Activated naive CD4-positive, alpha-beta T cell treated with anti-CD3 and anti-CD28 coated beads for 36 hours (primary cell): ENCODE measurements at regions of chr7 and their contacts with region 1.

Region 1: DNA sequence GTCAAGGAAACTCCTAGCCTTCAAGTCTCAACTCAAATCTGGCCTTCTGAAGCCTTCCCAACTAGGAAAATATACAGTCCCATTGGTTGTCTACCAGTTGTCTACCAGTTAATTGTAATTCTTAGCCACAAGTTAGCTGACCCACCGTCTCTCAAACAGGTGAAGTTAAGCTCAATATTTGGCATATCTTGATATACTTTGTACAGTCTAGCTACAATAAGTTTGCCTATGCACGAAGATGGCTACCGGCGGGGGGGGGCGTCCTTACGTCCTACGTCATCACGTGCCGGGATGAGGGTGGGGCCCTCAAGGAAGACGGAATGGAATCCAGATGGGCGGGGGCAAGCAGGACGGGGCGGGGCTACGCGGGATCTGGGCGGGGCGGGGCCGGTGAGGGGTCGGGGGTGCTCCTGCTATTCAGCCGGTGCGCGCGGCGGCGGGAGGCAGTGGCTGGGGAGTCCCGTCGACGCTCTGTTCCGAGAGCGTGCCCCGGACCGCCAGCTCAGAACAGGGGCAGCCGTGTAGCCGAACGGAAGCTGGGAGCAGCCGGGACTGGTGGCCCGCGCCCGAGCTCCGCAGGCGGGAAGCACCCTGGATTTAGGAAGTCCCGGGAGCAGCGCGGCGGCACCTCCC is at the start of gene AHR:
- DNase-seq: peak; percentile 97
- H3K4me3 Mint-ChIP-seq: peak within 1 kb of the TSS; percentile 92
- H3K27ac Mint-ChIP-seq: peak within 1 kb of the TSS; percentile 91
- H3K4me1 Mint-ChIP-seq: peaks cover 25% of the 10 kb centered on the region
- H3K27me3 Mint-ChIP-seq: no peaks in the 10 kb centered on the region
- total RNA-seq, gene AHR: 24.5 to 27.5 TPM

Region 2: GRCh38 chr7:16420649-16421332 is 877.5 kb before region 1 on chr7:
- CTCF ChIA-PET with region 1: no interaction called
- intact Hi-C with region 1: loop called (anchors 5 kb)
- DNase-seq: peak; percentile 90
- H3K4me3 Mint-ChIP-seq: peak overlapping the region; percentile 92
- H3K27ac Mint-ChIP-seq: peak overlapping the region; percentile 89
- H3K4me1 Mint-ChIP-seq: peaks cover 13% of the 10 kb centered on the region
- H3K27me3 Mint-ChIP-seq: no peaks in the 10 kb centered on the region

Region 3: DNA sequence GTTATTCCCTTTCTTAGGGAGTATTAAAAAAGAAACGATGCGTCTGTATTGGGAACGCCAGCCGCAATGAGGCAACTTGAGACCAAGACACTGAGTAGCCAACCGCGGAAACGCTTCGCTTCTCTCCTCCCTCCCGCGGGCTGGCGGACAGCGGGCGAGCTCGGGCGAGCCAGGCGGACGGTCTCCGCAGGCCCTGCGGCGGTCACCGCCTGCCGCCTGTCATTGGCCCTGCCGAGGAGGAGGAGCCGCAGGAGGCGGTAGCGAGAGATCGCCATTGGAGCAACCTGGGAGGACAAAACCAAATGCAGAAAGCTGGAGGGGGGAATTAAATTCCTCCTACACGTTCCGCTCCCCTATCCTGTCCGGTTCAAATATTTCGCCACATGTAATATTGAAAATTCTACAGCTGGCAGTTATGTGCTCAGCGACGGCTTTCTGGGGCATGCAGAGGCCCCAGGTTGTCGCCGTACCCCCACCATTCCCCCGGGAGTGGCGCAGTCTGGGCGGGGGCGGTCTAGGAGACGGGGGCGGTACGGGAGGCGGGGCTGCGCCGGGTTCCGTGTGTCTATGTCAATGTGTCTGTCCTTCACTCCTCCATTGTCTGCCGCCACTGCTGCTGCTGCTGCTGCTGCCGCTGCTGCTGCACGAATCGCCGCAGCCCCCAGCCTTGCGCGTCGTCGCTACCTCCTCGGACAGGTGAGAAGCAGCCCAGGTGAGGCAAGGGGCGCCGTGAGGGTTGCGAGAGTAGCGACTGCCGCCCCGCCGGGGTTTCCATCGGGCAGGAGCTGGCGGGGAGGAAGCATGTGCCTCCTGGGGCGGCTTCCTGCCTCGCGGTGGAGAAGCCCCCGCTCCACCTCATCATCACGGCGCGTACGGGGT is 652.5 kb before region 1 on chr7 and contains the starts of genes ANKMY2 and BZW2:
- CTCF ChIA-PET with region 1: no interaction called
- intact Hi-C with region 1: loop called (anchors 1 kb)
- DNase-seq: peak; percentile 94
- H3K4me3 Mint-ChIP-seq: peak within 1 kb of the TSS; percentile 97
- H3K27ac Mint-ChIP-seq: peak within 1 kb of the TSS; percentile 95
- H3K4me1 Mint-ChIP-seq: peaks cover 53% of the 10 kb centered on the region
- H3K27me3 Mint-ChIP-seq: no peaks in the 10 kb centered on the region
- total RNA-seq, gene ANKMY2: 4.6 to 4.7 TPM
- total RNA-seq, gene BZW2: 118 to 122 TPM

Region 4: GRCh38 chr7:17063045-17063383 is 235.3 kb before region 1 on chr7:
- CTCF ChIA-PET with region 1: interaction called, 15 read pairs
- intact Hi-C with region 1: loop called (anchors 1 kb)
- DNase-seq: no peak
- H3K4me3 Mint-ChIP-seq: no peak overlapping the region
- H3K27ac Mint-ChIP-seq: no peak overlapping the region
- H3K4me1 Mint-ChIP-seq: peaks cover 2% of the 10 kb centered on the region
- H3K27me3 Mint-ChIP-seq: no peaks in the 10 kb centered on the region

Region 5: DNA sequence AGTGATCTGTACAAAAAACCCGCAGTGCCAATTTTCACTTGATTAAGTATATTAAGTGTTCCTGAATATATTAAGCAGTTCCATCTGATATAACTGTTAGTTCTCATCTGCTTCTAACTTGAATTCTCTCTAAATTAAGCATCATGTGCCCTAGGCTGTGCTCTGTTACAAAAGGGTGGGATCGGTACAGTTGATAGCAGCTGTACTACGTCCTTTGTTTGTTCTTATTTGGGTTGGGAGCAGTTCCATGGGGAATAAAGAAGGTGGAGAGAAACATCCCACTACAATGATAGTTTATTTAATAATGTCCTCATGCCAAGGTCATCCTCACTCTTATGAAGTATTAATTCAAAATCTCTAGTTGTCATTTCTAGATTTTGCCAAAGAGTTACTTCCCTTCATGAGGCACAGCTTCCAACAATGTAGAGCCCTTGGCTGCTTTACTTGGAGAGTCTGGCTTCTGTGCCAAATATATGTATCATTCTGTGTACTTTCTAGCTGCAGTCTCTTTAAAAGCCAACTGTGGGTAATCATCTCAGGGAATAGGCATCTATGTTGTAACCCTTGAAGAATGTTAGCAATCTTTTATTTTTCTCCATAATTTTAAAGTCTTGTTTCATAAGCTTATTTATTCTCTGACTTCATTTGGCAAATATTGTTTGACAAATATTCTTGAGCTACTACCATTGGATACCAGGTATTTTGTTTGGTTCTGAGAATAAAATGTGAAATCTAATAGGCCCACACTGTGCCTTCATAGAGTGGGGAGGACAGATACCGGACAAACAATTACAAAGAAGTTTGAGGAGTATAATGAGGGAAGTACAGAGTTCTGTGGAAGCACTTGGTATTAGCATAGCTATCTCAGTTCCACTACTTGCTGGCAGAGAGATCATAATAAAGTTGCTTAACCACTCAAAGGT is 22.3 kb before region 1 on chr7:
- CTCF ChIA-PET with region 1: interaction called, 4 read pairs
- intact Hi-C with region 1: loop called (anchors 2 kb)
- DNase-seq: no peak
- H3K4me3 Mint-ChIP-seq: no peak overlapping the region
- H3K27ac Mint-ChIP-seq: peak overlapping the region; percentile 25
- H3K4me1 Mint-ChIP-seq: peaks cover 19% of the 10 kb centered on the region
- H3K27me3 Mint-ChIP-seq: no peaks in the 10 kb centered on the region

Region 6: DNA sequence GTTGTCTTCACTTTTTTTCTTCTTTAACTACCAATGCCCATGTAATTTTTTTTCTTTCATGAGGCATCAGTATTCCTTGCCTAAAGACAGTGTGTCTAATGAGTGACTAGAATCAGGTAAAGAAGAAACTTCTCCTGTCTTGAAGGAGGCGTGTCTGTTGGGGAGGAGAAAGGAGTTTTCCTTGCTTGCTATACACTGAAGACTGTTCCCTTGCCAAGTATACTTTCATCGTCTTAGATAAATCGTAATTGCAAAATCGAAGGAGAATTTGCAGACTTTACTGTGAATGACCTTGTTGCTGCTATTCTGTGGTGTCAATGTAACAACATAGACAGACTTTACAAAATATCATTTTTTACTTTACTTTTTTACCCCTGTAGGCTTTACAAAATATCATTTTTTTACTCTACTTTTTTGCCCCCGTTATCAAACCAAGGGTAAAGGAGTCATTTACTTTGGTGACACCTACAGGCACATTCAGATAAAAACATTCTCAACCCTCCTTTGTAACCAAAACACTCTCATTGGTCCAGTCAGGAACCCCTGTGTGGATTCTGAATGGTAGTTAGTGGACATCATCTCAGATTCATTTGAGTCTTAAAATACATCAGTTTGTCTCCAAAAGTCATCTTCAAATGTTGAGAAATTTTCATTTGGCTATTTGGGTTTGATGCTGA is 232.6 kb after region 1 on chr7:
- CTCF ChIA-PET with region 1: no interaction called
- intact Hi-C with region 1: loop called (anchors 2 kb)
- DNase-seq: no peak
- H3K4me3 Mint-ChIP-seq: no peak overlapping the region
- H3K27ac Mint-ChIP-seq: no peak overlapping the region
- H3K4me1 Mint-ChIP-seq: no peaks in the 10 kb centered on the region
- H3K27me3 Mint-ChIP-seq: peaks cover 10% of the 10 kb centered on the region